Mammary epithelial cell (primary cell): ENCODE measurements at regions of chr21 and their contacts with region 1.

Region 1: DNA sequence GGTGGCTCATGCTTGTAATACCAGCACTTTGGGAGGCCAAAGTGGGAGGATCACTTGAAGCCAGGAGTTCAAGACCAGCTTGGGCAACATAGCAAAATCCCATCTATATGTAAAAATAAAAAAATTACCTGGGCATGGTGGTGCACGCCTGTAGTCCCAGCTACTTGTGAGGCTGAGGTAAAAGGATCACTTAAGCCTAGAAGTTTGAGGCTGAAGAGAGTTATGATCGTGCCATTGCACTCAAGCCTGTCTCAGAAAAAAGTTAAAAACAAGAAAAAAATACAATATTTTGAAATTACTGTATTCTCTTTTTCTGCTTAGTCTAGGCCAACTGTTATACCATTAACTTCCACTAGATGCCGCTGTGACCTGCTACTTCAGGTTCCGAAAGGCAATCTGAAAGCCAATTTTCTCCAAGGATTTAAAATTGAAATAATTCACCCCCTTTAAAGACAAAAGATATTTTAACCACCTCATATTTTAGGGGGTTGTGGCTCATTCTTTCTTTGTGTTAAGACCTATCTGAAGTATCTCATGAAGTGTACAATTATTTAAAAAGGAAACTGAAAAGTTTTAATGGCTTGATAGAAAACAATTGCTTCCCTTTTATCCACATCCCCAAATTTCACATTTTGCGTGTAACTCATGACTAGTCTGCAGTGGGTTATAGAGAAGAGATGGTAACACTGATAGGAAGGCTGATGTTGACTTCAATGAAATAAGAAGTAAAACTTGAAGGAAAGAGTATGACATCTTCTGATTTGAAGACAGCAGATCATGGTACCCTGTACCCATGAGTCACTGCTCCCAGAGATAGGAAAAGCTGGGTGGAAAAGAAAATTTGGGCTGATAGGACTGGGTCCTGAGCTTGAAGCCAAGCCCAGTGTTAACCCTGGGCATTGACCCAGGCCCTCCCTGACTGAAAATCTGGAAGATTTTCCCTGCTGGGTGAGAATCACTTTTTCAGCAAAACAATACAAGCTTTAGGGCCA is 24.4 kb upstream of the CLDN14 start:
- DNase-seq: peak; percentile 11
- H3K4me3 ChIP-seq: no peak overlapping the region
- H3K27ac ChIP-seq: no peak overlapping the region
- H3K4me1 ChIP-seq: peaks cover 9% of the 10 kb centered on the region
- H3K27me3 ChIP-seq: no peaks in the 10 kb centered on the region
- CTCF ChIP-seq: peak; percentile 78 to 86

Region 2: GRCh38 chr21:36589355-36589971 is 85.1 kb after region 1 on chr21:
- CTCF ChIA-PET with region 1: no interaction called
- dilution Hi-C with region 1: no loop called
- in situ Hi-C with region 1: no loop called
- intact Hi-C with region 1: loop called (anchors 1 kb)
- DNase-seq: no peak
- H3K4me3 ChIP-seq: no peak overlapping the region
- H3K27ac ChIP-seq: no peak overlapping the region
- H3K4me1 ChIP-seq: peaks cover 9% of the 10 kb centered on the region
- H3K27me3 ChIP-seq: peaks cover 1% of the 10 kb centered on the region
- CTCF ChIP-seq: peak; percentile 39 to 61

Region 3: DNA sequence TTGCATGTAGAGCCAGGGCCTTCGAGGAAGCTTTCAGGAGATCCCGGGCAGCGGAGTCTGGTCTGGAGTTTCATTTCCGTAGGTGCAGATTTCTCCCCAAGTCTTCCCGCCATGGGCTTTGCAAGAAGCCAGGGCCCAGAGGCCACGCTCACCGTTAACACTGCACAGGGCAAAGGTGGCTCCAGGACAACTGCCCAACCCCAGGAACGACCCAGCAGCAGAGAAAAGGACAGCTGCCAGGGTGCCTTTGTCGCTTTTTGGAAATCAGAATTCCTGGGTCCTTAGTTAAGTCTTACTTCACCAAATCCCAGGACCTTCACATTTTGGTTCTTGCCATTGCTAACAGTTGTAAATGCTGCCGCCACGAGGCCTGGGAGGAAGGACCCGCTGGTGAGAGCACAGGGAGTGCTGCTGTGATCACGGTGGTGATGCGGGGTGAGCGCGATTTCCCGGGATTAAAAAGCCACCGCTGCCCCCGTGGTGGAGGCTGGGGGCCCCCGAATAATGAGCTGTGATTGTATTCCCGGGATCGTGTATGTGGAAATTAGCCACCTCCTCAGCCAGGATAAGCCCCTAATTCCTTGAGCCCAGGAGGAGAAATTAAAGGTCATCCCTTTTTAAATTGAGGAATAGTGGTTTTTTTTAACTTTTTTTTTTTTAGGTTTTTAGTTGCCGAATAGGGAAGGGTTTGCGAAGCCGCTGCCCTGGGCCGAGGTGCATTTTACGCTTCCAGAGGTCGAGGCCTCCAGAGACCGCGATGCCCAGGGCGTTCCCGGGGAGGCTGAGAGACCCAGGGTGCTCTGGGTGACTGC is 202.8 kb after region 1 on chr21:
- CTCF ChIA-PET with region 1: no interaction called
- dilution Hi-C with region 1: no loop called
- in situ Hi-C with region 1: no loop called
- intact Hi-C with region 1: loop called (anchors 10 kb)
- DNase-seq: no peak
- H3K4me3 ChIP-seq: no peak overlapping the region
- H3K27ac ChIP-seq: no peak overlapping the region
- H3K4me1 ChIP-seq: peaks cover 20% of the 10 kb centered on the region
- H3K27me3 ChIP-seq: peaks cover 90% of the 10 kb centered on the region
- CTCF ChIP-seq: peak in 1 of 2 donors; percentile 28

Region 4: GRCh38 chr21:36773117-36773516 is 268.8 kb after region 1 on chr21:
- CTCF ChIA-PET with region 1: no interaction called
- dilution Hi-C with region 1: loop called (anchors 5 kb)
- in situ Hi-C with region 1: no loop called
- intact Hi-C with region 1: no loop called
- DNase-seq: peak; percentile 84
- H3K4me3 ChIP-seq: no peak overlapping the region
- H3K27ac ChIP-seq: no peak overlapping the region
- H3K4me1 ChIP-seq: peaks cover 5% of the 10 kb centered on the region
- H3K27me3 ChIP-seq: no peaks in the 10 kb centered on the region
- CTCF ChIP-seq: no peak